Common myeloid progenitor, CD34-positive (primary cell): ENCODE measurements at regions of chr4 and their contacts with region 1.

Region 1: GRCh38 chr4:88613417-88613875 is 21.2 kb downstream of the HERC3 start:
- DNase-seq: peak; percentile 78 to 96 (median 93)
- H3K4me3 ChIP-seq: peak overlapping the region in 5 of 7 experiments; percentile 1 to 62 (median 38)
- H3K27ac ChIP-seq: peak overlapping the region; percentile 51 to 80
- H3K4me1 ChIP-seq: peaks cover 13 to 34% (median 26%) of the 10 kb centered on the region in 4 experiments
- H3K27me3 ChIP-seq: no peaks in the 10 kb centered on the region

Region 2: GRCh38 chr4:88497859-88498409 is 115.5 kb before region 1 on chr4:
- CTCF ChIA-PET with region 1: no interaction called
- POLR2A ChIA-PET with region 1: no interaction called
- DNase-seq: no peak
- H3K4me3 ChIP-seq: no peak overlapping the region
- H3K27ac ChIP-seq: no peak overlapping the region
- H3K4me1 ChIP-seq: no peaks in the 10 kb centered on the region
- H3K27me3 ChIP-seq: no peaks in the 10 kb centered on the region

Region 3: GRCh38 chr4:88591787-88592599 is 21.5 kb before region 1 on chr4 and contains the start of gene HERC3:
- CTCF ChIA-PET with region 1: interaction called, 15 read pairs
- POLR2A ChIA-PET with region 1: no interaction called
- DNase-seq: peak; percentile 89 to 95 (median 95)
- H3K4me3 ChIP-seq: peak within 1 kb of the TSS; percentile 69 to 85 (median 82)
- H3K27ac ChIP-seq: peak within 1 kb of the TSS; percentile 33 to 84
- H3K4me1 ChIP-seq: peaks cover 11 to 24% (median 15%) of the 10 kb centered on the region in 4 experiments
- H3K27me3 ChIP-seq: no peaks in the 10 kb centered on the region

Region 4: GRCh38 chr4:88600176-88600838 is 13.1 kb before region 1 on chr4:
- CTCF ChIA-PET with region 1: interaction called, 6 read pairs
- POLR2A ChIA-PET with region 1: interaction called, 11 read pairs
- DNase-seq: peak; percentile 50 to 82 (median 67)
- H3K4me3 ChIP-seq: peak overlapping the region in 1 of 7 experiments; percentile 40
- H3K27ac ChIP-seq: no peak overlapping the region
- H3K4me1 ChIP-seq: peaks cover 12 to 21% (median 17%) of the 10 kb centered on the region in 4 experiments
- H3K27me3 ChIP-seq: no peaks in the 10 kb centered on the region

Region 5: DNA sequence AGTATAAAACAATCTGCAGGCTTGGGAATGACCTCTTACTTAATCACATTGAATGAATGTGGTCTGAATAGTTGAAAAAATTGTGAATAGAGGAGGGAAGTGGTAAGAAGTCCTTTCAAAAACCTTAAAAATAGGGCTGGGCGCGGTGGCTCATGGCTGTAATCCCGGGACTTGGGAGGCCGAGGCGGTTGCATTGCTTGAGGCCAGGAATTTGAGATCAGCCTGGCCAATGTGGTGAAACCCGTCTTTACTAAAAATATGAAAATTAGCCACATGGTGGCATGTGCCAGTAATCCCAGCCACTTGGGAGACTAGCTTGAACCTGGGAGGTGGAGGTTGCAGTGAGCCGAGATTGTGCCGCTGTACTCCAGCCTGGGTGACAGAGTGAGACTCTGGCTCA is 15.3 kb after region 1 on chr4:
- CTCF ChIA-PET with region 1: no interaction called
- POLR2A ChIA-PET with region 1: no interaction called
- DNase-seq: no peak
- H3K4me3 ChIP-seq: no peak overlapping the region
- H3K27ac ChIP-seq: no peak overlapping the region
- H3K4me1 ChIP-seq: no peaks in the 10 kb centered on the region
- H3K27me3 ChIP-seq: no peaks in the 10 kb centered on the region